ENCODE measurements at regions of chr6 and their contacts with region 1.

Region 1: DNA sequence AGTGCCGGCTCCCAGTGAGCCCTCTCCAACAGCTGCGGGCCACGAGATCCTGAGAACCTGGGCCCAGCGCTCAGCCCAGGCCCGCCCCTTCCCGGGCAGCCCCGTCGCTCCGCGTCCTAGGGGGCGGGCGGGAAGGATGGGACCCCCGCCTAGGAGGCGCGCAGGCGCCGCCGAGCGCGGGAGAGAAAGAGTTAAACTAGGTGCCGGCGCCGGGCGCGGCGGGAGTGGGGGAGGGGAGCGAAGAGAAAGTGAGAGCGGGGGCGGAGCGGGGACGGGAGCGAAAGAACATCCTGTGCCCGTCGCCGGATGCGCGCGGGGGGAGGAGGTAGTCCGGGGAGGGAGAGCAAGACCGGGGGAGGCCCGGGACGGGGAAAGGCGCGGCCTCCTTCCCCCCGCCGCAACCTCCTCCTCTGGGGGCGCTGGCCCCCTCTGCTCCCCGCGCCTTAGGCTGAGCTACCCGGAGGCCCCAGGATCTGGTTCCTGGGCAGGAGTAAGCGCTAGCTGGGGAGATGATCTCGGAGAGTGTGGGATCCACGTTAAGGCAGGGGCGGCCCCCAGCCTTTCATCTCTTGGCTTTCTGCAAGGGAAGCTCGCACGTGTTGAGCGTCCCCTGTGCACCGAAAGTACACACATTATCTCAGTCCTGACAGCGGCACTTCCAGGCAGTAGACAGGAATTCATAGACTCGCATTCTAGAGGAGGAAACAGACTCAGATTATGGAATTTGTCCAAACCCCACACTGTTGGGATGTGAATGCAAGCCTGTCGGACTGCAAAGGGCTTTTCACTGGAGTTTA is 4.9 kb upstream of the ARMC12 start:
- DNase-seq: peak; percentile 95
- H3K4me3 Mint-ChIP-seq: peak overlapping the region; percentile 83
- H3K27ac Mint-ChIP-seq: peak overlapping the region; percentile 94
- H3K4me1 Mint-ChIP-seq: peaks cover 72% of the 10 kb centered on the region
- H3K27me3 Mint-ChIP-seq: no peaks in the 10 kb centered on the region

Region 2: GRCh38 chr6:35552285-35552917 is 179.5 kb before region 1 on chr6:
- CTCF ChIA-PET with region 1: interaction called, 15 read pairs
- POLR2A ChIA-PET with region 1: no interaction called
- DNase-seq: peak; percentile 76
- H3K4me3 Mint-ChIP-seq: no peak overlapping the region
- H3K27ac Mint-ChIP-seq: no peak overlapping the region
- H3K4me1 Mint-ChIP-seq: peaks cover 4% of the 10 kb centered on the region
- H3K27me3 Mint-ChIP-seq: peaks cover 14% of the 10 kb centered on the region

Region 3: DNA sequence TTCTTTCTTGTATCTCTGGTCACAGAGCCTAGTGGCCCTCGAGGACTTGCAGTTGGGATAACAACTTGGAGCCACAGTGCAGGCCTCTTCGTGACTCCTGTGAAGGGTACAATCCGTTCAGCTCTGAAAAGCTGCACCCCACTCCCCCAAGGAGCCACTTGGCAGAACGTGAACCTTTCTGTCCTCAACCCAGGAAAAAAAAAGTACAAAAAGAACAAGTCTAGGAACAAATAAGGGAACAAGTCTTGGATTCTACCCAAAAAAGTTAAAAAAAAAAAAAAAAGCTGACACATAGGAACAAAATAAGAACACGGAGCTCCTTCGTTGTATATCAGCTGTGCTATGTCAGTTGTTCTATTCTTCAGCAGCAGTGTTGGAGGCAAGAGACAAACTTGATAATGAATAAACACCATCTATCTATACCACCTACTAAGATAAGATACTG is 141.3 kb before region 1 on chr6:
- CTCF ChIA-PET with region 1: interaction called, 90 read pairs
- POLR2A ChIA-PET with region 1: interaction called, 8 read pairs
- DNase-seq: no peak
- H3K4me3 Mint-ChIP-seq: no peak overlapping the region
- H3K27ac Mint-ChIP-seq: peak overlapping the region; percentile 16
- H3K4me1 Mint-ChIP-seq: peaks cover 28% of the 10 kb centered on the region
- H3K27me3 Mint-ChIP-seq: no peaks in the 10 kb centered on the region

Region 4: GRCh38 chr6:35635601-35636597 is 96.0 kb before region 1 on chr6:
- CTCF ChIA-PET with region 1: interaction called, 11 read pairs
- POLR2A ChIA-PET with region 1: no interaction called
- DNase-seq: no peak
- H3K4me3 Mint-ChIP-seq: no peak overlapping the region
- H3K27ac Mint-ChIP-seq: peak overlapping the region; percentile 3
- H3K4me1 Mint-ChIP-seq: peaks cover 38% of the 10 kb centered on the region
- H3K27me3 Mint-ChIP-seq: no peaks in the 10 kb centered on the region

Region 5: GRCh38 chr6:35681298-35681697 is 50.6 kb before region 1 on chr6:
- CTCF ChIA-PET with region 1: interaction called, 24 read pairs
- POLR2A ChIA-PET with region 1: interaction called, 36 read pairs
- DNase-seq: no peak
- H3K4me3 Mint-ChIP-seq: no peak overlapping the region
- H3K27ac Mint-ChIP-seq: peak overlapping the region; percentile 58
- H3K4me1 Mint-ChIP-seq: peaks cover 30% of the 10 kb centered on the region
- H3K27me3 Mint-ChIP-seq: no peaks in the 10 kb centered on the region

Region 6: DNA sequence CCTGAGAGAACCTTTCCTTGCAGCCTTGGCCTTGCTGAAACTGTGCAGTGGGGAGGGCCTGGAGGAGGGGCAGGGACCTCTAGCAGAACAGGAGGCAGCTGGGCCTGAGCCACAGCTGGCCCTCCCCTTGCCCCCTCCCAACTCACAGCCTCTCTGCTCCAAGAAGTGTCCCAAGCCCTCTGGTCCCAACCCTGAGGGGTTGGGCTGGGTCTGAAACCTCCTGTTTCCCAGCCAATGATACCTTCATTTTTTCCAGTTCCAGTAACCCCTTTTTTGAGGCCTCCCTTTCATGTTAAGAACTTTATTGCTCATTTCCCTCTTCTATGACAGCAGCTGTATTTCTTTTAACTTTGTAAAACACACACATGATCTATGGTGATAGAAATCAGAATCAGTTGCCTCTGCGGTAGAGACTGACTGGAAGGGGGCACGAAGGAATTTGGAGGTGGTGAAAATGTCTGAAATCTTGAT is 13.0 kb before region 1 on chr6:
- CTCF ChIA-PET with region 1: interaction called, 4 read pairs
- POLR2A ChIA-PET with region 1: interaction called, 13 read pairs
- DNase-seq: no peak
- H3K4me3 Mint-ChIP-seq: no peak overlapping the region
- H3K27ac Mint-ChIP-seq: peak overlapping the region; percentile 64
- H3K4me1 Mint-ChIP-seq: peaks cover 37% of the 10 kb centered on the region
- H3K27me3 Mint-ChIP-seq: no peaks in the 10 kb centered on the region

Region 7: DNA sequence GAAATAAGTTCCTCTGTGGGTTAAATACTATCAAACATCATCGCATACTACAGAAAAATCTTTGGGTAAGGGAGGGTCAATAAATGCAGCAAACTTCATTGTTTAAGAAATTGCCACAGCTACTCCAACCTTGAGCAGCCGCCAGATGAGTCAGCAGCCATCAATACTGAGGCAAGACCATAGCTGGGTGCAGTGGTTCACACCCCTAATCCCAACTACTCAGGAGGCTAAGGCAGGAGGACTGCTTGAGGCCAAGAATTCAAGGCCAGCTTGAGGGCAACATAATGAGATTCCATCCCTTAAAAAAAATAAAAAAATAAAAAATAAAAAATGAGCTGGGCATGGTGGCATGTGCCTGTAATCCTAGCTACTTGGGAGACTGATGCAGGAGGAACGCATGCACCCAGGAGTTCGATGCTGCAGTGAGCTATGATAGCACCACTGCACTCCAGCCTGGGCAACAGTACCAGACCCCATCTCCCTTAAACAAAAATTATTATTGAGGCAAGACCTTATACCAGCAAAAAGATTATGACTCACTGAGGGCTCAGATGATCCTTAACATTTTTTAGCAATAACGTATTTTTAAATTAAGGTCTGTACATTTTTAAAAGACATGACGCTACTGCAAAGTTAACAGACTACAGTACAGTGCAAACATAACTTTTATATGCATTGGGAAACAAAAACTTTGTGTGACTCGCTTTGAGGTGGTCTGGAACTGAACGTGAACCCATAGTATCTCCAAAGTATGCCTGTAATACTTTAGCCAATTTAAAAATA is 180.1 kb after region 1 on chr6:
- CTCF ChIA-PET with region 1: no interaction called
- POLR2A ChIA-PET with region 1: no interaction called
- DNase-seq: no peak
- H3K4me3 Mint-ChIP-seq: no peak overlapping the region
- H3K27ac Mint-ChIP-seq: no peak overlapping the region
- H3K4me1 Mint-ChIP-seq: peaks cover 13% of the 10 kb centered on the region
- H3K27me3 Mint-ChIP-seq: no peaks in the 10 kb centered on the region